IMR-90 (cell line): ENCODE measurements at regions of chr14 and their contacts with region 1.

Region 1: DNA sequence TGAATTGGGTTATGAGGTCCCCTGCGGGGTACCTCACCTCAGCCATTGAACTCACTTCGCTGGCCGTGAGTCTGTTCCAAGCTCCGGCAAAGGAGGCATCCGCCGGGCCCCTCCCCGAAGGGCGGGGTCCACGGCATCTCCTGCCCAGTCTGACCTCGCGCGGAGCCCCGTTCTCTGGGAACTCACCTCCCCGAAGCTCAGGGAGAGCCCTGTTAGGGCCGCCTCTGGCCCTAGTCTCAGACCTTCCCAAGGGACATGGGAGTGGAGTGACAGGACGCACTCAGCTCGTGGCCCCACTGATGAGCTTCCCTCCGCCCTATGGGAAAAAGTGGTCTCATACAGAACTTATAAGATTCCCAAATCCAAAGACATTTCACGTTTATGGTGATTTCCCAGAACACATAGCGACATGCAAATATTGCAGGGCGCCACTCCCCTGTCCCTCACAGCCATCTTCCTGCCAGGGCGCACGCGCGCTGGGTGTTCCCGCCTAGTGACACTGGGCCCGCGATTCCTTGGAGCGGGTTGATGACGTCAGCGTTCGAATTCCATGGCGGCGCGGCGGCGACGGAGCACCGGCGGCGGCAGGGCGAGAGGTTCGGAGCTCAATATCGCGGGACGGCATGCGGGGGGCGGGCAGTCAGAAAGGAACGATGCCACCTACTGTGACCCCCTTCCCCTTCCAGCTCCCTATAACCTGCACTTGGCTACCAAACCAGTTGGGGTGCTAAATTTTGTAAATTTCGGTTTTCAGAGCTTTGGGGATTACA is at the start of gene PARP2:
- DNase-seq: peak; percentile 99
- ATAC-seq: peak; percentile 96
- H3K4me3 ChIP-seq: peak within 1 kb of the TSS; percentile 84
- H3K27ac ChIP-seq: peak within 1 kb of the TSS; percentile 71
- H3K4me1 ChIP-seq: no peaks in the 10 kb centered on the region
- H3K27me3 ChIP-seq: 0 out of 2 replicates have a peak, but pooled peaks cover 2% of the 10 kb centered on the region
- CTCF ChIP-seq: no peak
- POLR2A ChIP-seq: peak; percentile 99
- RAD21 ChIP-seq: no peak
- total RNA-seq, gene PARP2: 11.7 TPM in 2 replicates

Region 2: GRCh38 chr14:20305265-20306078 is 37.8 kb before region 1 on chr14 and contains the start of gene TTC5:
- CTCF ChIA-PET with region 1: no interaction called
- POLR2A ChIA-PET with region 1: no interaction called
- dilution Hi-C with region 1: no loop called
- in situ Hi-C with region 1: no loop called
- intact Hi-C with region 1: loop called (anchors 1 kb)
- DNase-seq: peak; percentile 89
- ATAC-seq: peak; percentile 96
- H3K4me3 ChIP-seq: peak within 1 kb of the TSS; percentile 74
- H3K27ac ChIP-seq: peak within 1 kb of the TSS; percentile 76
- H3K4me1 ChIP-seq: peaks cover 2% of the 10 kb centered on the region
- H3K27me3 ChIP-seq: no peaks in the 10 kb centered on the region
- CTCF ChIP-seq: peak; percentile 95
- POLR2A ChIP-seq: no peak
- RAD21 ChIP-seq: peak; percentile 34
- total RNA-seq, gene TTC5: 28.6 and 29.4 TPM in 2 replicates

Region 3: DNA sequence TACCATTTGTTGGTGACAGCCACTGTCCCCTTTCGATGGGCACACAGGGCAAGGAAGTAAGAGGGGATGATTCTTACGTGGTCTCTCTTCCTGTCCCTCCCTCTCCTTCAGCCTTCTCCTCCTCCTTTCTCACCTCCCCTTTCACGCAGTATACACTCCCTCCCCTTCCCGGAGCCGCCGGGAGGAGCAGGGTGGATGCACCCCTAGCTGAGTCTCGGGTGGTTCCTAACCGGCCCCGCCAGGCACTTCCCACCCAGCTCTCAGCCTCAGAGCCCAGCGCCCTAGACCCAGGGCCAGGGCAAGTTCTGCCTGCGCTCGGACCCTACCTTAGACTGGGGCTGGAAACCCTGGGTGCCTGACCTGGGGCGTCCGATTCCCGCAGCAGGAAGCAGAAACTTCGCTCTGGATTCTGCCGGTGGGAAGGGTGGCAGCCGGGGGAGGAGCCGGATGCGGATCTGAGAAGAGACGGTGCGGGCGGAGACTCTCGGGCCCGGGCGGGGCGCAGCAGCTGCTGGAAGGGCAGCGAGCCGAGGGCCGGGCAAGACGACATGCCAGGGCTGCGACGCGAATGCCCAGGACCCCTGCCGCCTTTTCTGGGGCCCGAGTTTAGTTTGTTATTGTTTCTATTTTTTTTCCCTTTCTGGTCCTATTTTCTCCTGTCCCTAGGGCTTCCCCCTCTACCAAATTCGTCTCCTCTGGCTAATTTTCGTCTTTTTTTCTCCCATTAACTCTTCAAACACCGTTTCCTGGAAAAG is 69.9 kb after region 1 on chr14 and contains the start of gene TEP1:
- CTCF ChIA-PET with region 1: interaction called, 4 read pairs
- POLR2A ChIA-PET with region 1: no interaction called
- dilution Hi-C with region 1: no loop called
- in situ Hi-C with region 1: no loop called
- intact Hi-C with region 1: loop called (anchors 2 kb)
- DNase-seq: peak; percentile 79
- ATAC-seq: peak; percentile 93
- H3K4me3 ChIP-seq: peak within 1 kb of the TSS; percentile 79
- H3K27ac ChIP-seq: peak within 1 kb of the TSS; percentile 98
- H3K4me1 ChIP-seq: peaks cover 6% of the 10 kb centered on the region
- H3K27me3 ChIP-seq: 0 out of 2 replicates have a peak, but pooled peaks cover 2% of the 10 kb centered on the region
- CTCF ChIP-seq: no peak
- POLR2A ChIP-seq: peak; percentile 80
- RAD21 ChIP-seq: no peak
- total RNA-seq, gene TEP1: 7.8 and 12.4 TPM in 2 replicates

Region 4: GRCh38 chr14:20461274-20462001 is 118.2 kb after region 1 on chr14 and contains the start of gene PIP4P1:
- CTCF ChIA-PET with region 1: interaction called, 3 read pairs
- POLR2A ChIA-PET with region 1: no interaction called
- dilution Hi-C with region 1: no loop called
- in situ Hi-C with region 1: no loop called
- intact Hi-C with region 1: loop called (anchors 1 kb)
- DNase-seq: peak; percentile 100
- ATAC-seq: peak; percentile 96
- H3K4me3 ChIP-seq: peak within 1 kb of the TSS; percentile 53
- H3K27ac ChIP-seq: peak within 1 kb of the TSS; percentile 54
- H3K4me1 ChIP-seq: 0 out of 2 replicates have a peak, but pooled peaks cover 4% of the 10 kb centered on the region
- H3K27me3 ChIP-seq: no peaks in the 10 kb centered on the region
- CTCF ChIP-seq: no peak
- POLR2A ChIP-seq: no peak; the same call in none of the 2 replicates
- RAD21 ChIP-seq: no peak
- total RNA-seq, gene PIP4P1: 15.0 and 15.2 TPM in 2 replicates

Region 5: GRCh38 chr14:20667957-20668356 is 324.7 kb after region 1 on chr14:
- CTCF ChIA-PET with region 1: no interaction called
- POLR2A ChIA-PET with region 1: no interaction called
- dilution Hi-C with region 1: no loop called
- in situ Hi-C with region 1: no loop called
- intact Hi-C with region 1: no loop called
- DNase-seq: no peak
- ATAC-seq: no peak
- H3K4me3 ChIP-seq: no peak overlapping the region
- H3K27ac ChIP-seq: no peak overlapping the region
- H3K4me1 ChIP-seq: no peaks in the 10 kb centered on the region
- H3K27me3 ChIP-seq: peaks cover 6% of the 10 kb centered on the region
- CTCF ChIP-seq: no peak
- POLR2A ChIP-seq: no peak
- RAD21 ChIP-seq: no peak

Region 6: GRCh38 chr14:20682435-20683124 is 339.3 kb after region 1 on chr14:
- CTCF ChIA-PET with region 1: no interaction called
- POLR2A ChIA-PET with region 1: no interaction called
- dilution Hi-C with region 1: no loop called
- in situ Hi-C with region 1: no loop called
- intact Hi-C with region 1: loop called (anchors 2 kb)
- DNase-seq: peak; percentile 92
- ATAC-seq: peak; percentile 67
- H3K4me3 ChIP-seq: peak overlapping the region; percentile 65
- H3K27ac ChIP-seq: peak overlapping the region; percentile 90
- H3K4me1 ChIP-seq: no peaks in the 10 kb centered on the region
- H3K27me3 ChIP-seq: no peaks in the 10 kb centered on the region
- CTCF ChIP-seq: no peak
- POLR2A ChIP-seq: peak; percentile 92
- RAD21 ChIP-seq: no peak

Region 7: GRCh38 chr14:21092273-21093011 is 749.2 kb after region 1 on chr14:
- CTCF ChIA-PET with region 1: no interaction called
- POLR2A ChIA-PET with region 1: no interaction called
- dilution Hi-C with region 1: no loop called
- in situ Hi-C with region 1: loop called (anchors 25 kb)
- intact Hi-C with region 1: no loop called
- DNase-seq: peak; percentile 67
- ATAC-seq: peak; percentile 85
- H3K4me3 ChIP-seq: no peak overlapping the region
- H3K27ac ChIP-seq: no peak overlapping the region
- H3K4me1 ChIP-seq: peaks cover 5% of the 10 kb centered on the region
- H3K27me3 ChIP-seq: no peaks in the 10 kb centered on the region
- CTCF ChIP-seq: peak; percentile 100; the same call in 1 of the 2 replicates
- POLR2A ChIP-seq: peak; percentile 65; the same call in 1 of the 2 replicates
- RAD21 ChIP-seq: peak; percentile 100